ENCODE measurements at regions of chr12 and their contacts with region 1.

Region 1: GRCh38 chr12:112046003-112046402 is 32.8 kb downstream of the ERP29 start:
- DNase-seq: no peak
- ATAC-seq: peak in 1 of 4 donors; percentile 35
- H3K4me3 ChIP-seq: no peak overlapping the region
- H3K27ac ChIP-seq: peak overlapping the region in 1 of 12 donors; percentile 81
- H3K4me1 ChIP-seq: peaks cover 0 to 9% (median 0%) of the 10 kb centered on the region in 12 donors
- H3K27me3 ChIP-seq: no peaks in the 10 kb centered on the region
- CTCF ChIP-seq: no peak
- POLR2A ChIP-seq: no peak

Region 2: DNA sequence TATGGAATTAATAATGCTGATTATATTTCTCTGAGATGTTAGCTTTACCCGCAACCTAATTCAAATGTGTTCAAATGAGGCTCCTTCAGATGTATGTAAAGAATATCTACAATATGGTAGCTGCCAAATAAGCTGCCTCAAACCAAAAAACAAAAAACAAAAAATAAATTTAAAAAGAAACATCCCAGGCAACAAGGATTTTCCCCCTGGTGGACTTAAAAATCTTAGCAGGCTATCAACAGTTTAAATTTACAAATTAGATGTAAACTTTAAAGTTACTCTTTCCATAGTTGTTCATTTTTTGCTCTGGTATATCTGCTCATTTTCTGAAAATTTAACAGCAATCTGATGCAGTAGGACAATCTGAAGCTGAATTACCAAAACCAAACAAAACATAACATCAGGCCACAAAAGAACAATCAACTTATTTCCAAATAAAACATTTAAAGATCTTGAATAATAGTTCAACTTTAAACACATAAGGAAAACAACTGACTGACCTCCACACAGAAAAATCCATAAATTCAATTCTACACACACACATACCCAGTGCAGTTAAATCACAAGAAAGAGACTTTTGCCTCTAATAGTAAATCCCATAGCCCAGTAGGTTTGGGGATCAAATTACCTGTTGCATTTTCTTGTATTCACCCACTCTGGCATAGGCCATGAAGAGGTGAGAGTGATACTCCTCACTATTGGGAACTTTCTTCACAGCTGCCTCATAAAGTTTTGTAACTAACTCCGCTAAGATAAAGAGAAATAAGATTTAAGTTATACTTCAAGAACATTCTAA is 41.2 kb after region 1 on chr12:
- intact Hi-C with region 1: loop called in 2 of 10 experiments (anchors 5 to 10 kb)
- DNase-seq: no peak
- ATAC-seq: no peak
- H3K4me3 ChIP-seq: no peak overlapping the region
- H3K27ac ChIP-seq: no peak overlapping the region
- H3K4me1 ChIP-seq: peaks cover 0 to 12% (median 0%) of the 10 kb centered on the region in 12 donors
- H3K27me3 ChIP-seq: no peaks in the 10 kb centered on the region
- CTCF ChIP-seq: no peak
- POLR2A ChIP-seq: no peak

Region 3: GRCh38 chr12:112096667-112097066 is 50.7 kb after region 1 on chr12:
- intact Hi-C with region 1: loop called in 1 of 10 experiments (anchors 10 kb)
- DNase-seq: no peak
- ATAC-seq: peak in 1 of 4 donors; percentile 26
- H3K4me3 ChIP-seq: no peak overlapping the region
- H3K27ac ChIP-seq: peak overlapping the region in 3 of 12 donors; percentile 10 to 71 (median 45)
- H3K4me1 ChIP-seq: peaks cover 0 to 21% (median 7%) of the 10 kb centered on the region in 12 donors
- H3K27me3 ChIP-seq: no peaks in the 10 kb centered on the region
- CTCF ChIP-seq: no peak
- POLR2A ChIP-seq: no peak